ENCODE measurements at regions of chr16 and their contacts with region 1.

Region 1: DNA sequence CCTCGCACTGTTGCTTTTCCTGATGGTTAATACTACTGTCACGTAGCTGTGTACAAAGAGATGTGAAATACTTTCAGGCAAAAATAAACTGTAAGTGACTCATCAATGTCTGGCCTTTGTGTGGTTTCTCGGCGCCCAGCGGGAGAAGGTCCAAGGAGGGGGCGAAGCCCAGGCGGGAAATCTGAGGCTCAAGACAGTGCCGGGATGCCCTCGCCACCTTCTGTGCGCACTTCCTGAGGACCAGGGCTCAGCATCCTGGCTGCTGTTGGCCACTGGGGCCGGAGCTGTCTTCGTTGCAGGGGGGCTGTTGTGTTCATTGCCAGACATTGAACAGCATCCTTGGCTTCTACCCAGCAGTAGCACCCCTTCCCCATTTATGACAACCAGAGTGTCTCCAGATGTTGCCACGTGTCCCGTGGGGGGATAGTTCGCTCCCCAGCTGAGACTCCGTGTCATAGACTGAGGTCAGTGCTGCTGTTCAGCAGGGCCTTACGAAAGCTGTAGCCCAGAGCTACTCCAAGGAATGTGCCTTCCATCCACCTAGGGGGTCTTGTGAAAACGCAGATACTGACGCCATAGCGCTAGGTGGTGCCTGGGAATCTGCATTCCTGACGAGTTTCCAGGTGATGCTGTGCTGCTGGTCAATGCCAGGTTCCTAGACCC is 67.3 kb upstream of the PLCG2 start:
- DNase-seq: peak; percentile 85 to 91
- H3K4me3 ChIP-seq: no peak overlapping the region
- H3K27ac ChIP-seq: no peak overlapping the region
- H3K4me1 ChIP-seq: peaks cover 27% of the 10 kb centered on the region
- H3K27me3 ChIP-seq: no peaks in the 10 kb centered on the region
- CTCF ChIP-seq: no peak

Region 2: DNA sequence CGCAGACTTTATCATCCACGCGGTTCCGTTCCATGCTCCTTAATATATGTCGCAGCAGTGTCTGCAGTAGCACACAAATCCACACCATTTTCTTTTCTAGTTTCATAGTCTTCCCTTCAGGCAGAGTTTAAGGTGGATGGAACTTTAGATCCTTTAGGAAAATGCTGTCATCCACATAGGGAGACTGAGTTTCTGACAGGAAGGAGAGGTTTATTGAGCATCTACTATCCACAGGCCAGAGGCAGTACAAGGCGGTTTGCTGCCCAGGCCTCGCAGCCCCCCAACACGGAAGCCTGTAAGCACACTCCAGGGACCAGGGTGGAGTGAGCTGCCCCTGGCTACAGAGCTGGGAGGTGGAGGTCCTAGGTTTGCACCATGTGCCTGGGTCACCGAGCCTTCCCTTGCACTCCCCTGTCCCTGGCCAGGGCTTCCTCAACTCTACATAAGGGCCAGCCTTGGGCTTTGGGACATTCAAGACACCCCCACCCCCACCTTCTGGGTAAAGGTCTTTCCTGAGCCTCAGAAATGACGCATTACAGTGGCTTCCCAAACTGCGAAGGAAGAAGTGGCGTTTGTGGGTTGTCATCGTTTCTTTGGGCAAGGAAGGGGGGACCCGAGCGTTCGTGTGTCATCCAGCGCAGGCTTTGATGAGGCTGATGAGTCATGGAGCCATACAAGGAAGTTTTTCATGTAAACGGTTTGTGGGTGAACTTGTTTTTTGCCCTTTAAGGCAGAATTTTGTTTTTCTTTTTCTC is 79.2 kb before region 1 on chr16:
- CTCF ChIA-PET with region 1: no interaction called
- POLR2A ChIA-PET with region 1: no interaction called
- intact Hi-C with region 1: loop called (anchors 5 kb)
- DNase-seq: peak; percentile 79 to 95
- H3K4me3 ChIP-seq: peak overlapping the region; percentile 36; the same call in 1 of the 2 replicates
- H3K27ac ChIP-seq: peak overlapping the region; percentile 90
- H3K4me1 ChIP-seq: peaks cover 49% of the 10 kb centered on the region
- H3K27me3 ChIP-seq: no peaks in the 10 kb centered on the region
- CTCF ChIP-seq: no peak

Measured in PC-9 (cell line).